Lower leg skin (tissue), 4 donors: ENCODE measurements at regions of chr22 and their contacts with region 1.

Region 1: GRCh38 chr22:17830043-17830961 is 56.0 kb upstream of the BID start:
- DNase-seq: peak; percentile 87 to 97
- H3K4me3 ChIP-seq: no peak overlapping the region
- CTCF ChIP-seq: peak in 2 of 3 donors; percentile 72 to 97
- POLR2A ChIP-seq: no peak

Region 2: GRCh38 chr22:17638432-17639246 is 191.7 kb before region 1 on chr22 and contains the start of gene BCL2L13:
- intact Hi-C with region 1: no loop called
- DNase-seq: peak; percentile 89 to 98
- H3K4me3 ChIP-seq: peak within 1 kb of the TSS; percentile 84
- CTCF ChIP-seq: no peak
- POLR2A ChIP-seq: peak in 1 of 2 donors; percentile 91
- total RNA-seq, gene BCL2L13: 63.0 to 71.2 (median 67.5) TPM

Region 3: GRCh38 chr22:17891481-17892167 is 61.3 kb after region 1 on chr22:
- intact Hi-C with region 1: loop called (anchors 10 kb)
- DNase-seq: no peak
- H3K4me3 ChIP-seq: no peak overlapping the region
- CTCF ChIP-seq: no peak
- POLR2A ChIP-seq: no peak

Region 4: GRCh38 chr22:18077639-18078328 is 247.5 kb after region 1 on chr22 and contains the start of gene PEX26:
- intact Hi-C with region 1: loop called (anchors 2 kb)
- DNase-seq: peak; percentile 95 to 99
- H3K4me3 ChIP-seq: peak within 1 kb of the TSS; percentile 98
- CTCF ChIP-seq: no peak
- POLR2A ChIP-seq: no peak
- total RNA-seq, gene PEX26: 23.1 to 31.0 (median 24.8) TPM